ENCODE measurements at regions of chr12 and their contacts with region 1.

Region 1: GRCh38 chr12:101939856-101940265 is 62.5 kb downstream of the DRAM1 start:
- DNase-seq: peak; percentile 45
- H3K4me3 Mint-ChIP-seq: no peak overlapping the region
- H3K27ac Mint-ChIP-seq: no peak overlapping the region
- H3K4me1 Mint-ChIP-seq: peaks cover 39% of the 10 kb centered on the region
- H3K27me3 Mint-ChIP-seq: peaks cover 8% of the 10 kb centered on the region

Region 2: GRCh38 chr12:101819467-101819866 is 120.4 kb before region 1 on chr12:
- intact Hi-C with region 1: no loop called
- DNase-seq: no peak
- H3K4me3 Mint-ChIP-seq: peak overlapping the region; percentile 54
- H3K27ac Mint-ChIP-seq: peak overlapping the region; percentile 84
- H3K4me1 Mint-ChIP-seq: peaks cover 57% of the 10 kb centered on the region
- H3K27me3 Mint-ChIP-seq: no peaks in the 10 kb centered on the region

Region 3: GRCh38 chr12:101876861-101877815 is 62.7 kb before region 1 on chr12 and contains the start of gene DRAM1:
- intact Hi-C with region 1: loop called (anchors 1 kb)
- DNase-seq: peak; percentile 78
- H3K4me3 Mint-ChIP-seq: peak within 1 kb of the TSS; percentile 90
- H3K27ac Mint-ChIP-seq: peak within 1 kb of the TSS; percentile 83
- H3K4me1 Mint-ChIP-seq: peaks cover 12% of the 10 kb centered on the region
- H3K27me3 Mint-ChIP-seq: no peaks in the 10 kb centered on the region
- total RNA-seq, gene DRAM1: 3.2 and 4.1 TPM in 2 replicates

Region 4: GRCh38 chr12:102119674-102120563 is 180.1 kb after region 1 on chr12 and contains the starts of genes NUP37 and PARPBP:
- intact Hi-C with region 1: loop called (anchors 1 kb)
- DNase-seq: peak; percentile 92
- H3K4me3 Mint-ChIP-seq: peak within 1 kb of the TSS; percentile 92
- H3K27ac Mint-ChIP-seq: peak within 1 kb of the TSS; percentile 95
- H3K4me1 Mint-ChIP-seq: peaks cover 48% of the 10 kb centered on the region
- H3K27me3 Mint-ChIP-seq: no peaks in the 10 kb centered on the region
- total RNA-seq, gene NUP37: 81.5 and 84.1 TPM in 2 replicates
- total RNA-seq, gene PARPBP: 23.5 and 25.1 TPM in 2 replicates

Region 5: DNA sequence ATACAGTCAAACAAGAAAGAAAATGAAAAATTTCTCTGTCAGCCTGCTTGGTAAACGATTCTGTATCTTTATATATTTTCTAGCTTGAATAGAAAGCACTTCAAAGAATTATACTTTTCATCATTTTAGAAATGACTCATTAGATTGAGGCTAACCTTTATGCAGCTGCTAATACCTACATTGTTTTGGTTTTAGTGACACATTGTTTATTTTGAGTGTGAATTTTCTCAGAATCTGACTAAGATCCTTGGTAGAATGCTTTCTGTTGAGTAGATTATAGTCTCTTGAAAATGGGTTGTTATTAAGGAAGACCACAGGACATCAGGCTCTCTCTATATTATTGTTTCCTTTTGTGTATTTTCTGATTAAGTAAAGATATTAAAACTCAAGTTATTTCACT is 257.9 kb after region 1 on chr12 and contains the start of gene PMCH:
- intact Hi-C with region 1: loop called (anchors 1 kb)
- DNase-seq: no peak
- H3K4me3 Mint-ChIP-seq: peak within 1 kb of the TSS; percentile 2
- H3K27ac Mint-ChIP-seq: peak within 1 kb of the TSS; percentile 75
- H3K4me1 Mint-ChIP-seq: peaks cover 20% of the 10 kb centered on the region
- H3K27me3 Mint-ChIP-seq: no peaks in the 10 kb centered on the region
- total RNA-seq, gene PMCH: 3.1 and 4.3 TPM in 2 replicates

Region 6: DNA sequence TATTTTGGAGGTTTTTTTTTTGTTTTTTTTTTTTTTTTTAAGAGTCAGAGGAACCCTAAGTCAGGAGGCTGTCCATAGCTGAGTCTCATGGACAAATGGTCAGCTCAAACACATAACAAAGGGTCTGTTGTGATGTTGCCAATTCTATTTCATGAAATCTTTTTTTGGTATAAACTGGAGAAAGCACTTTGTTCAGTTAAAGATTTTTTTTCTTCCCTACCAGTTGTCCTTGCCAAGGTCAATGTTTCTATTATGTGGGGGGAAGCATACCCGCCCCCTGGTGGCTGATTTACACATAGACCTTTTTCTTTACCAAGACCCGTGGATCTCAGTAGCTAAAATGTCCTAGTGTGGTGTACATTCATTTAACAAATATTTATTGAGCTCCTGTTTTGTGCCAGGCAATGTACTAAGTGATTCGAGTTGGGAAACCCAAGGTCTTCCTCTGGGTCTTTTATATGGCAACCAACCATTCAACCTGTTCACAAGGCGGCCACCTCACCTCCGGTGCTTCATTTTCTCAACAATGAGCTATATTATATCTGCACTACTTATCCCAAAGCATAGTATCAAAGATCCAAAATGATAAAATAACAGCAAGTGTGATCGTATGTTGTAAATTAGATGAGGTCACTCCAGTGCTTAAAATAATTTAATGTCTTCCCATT is 762.7 kb after region 1 on chr12:
- intact Hi-C with region 1: loop called (anchors 1 kb)
- DNase-seq: peak; percentile 9
- H3K4me3 Mint-ChIP-seq: no peak overlapping the region
- H3K27ac Mint-ChIP-seq: no peak overlapping the region
- H3K4me1 Mint-ChIP-seq: no peaks in the 10 kb centered on the region
- H3K27me3 Mint-ChIP-seq: peaks cover 10% of the 10 kb centered on the region

Region 7: GRCh38 chr12:102769319-102769916 is 829.6 kb after region 1 on chr12:
- intact Hi-C with region 1: loop called (anchors 1 kb)
- DNase-seq: peak; percentile 11
- H3K4me3 Mint-ChIP-seq: no peak overlapping the region
- H3K27ac Mint-ChIP-seq: no peak overlapping the region
- H3K4me1 Mint-ChIP-seq: no peaks in the 10 kb centered on the region
- H3K27me3 Mint-ChIP-seq: peaks cover 12% of the 10 kb centered on the region

Region 8: GRCh38 chr12:102879144-102879763 is 939.4 kb after region 1 on chr12:
- intact Hi-C with region 1: loop called (anchors 1 kb)
- DNase-seq: no peak
- H3K4me3 Mint-ChIP-seq: no peak overlapping the region
- H3K27ac Mint-ChIP-seq: no peak overlapping the region
- H3K4me1 Mint-ChIP-seq: peaks cover 5% of the 10 kb centered on the region
- H3K27me3 Mint-ChIP-seq: peaks cover 4% of the 10 kb centered on the region

Measured in activated T-helper 1 cell treated with anti-CD3 and anti-CD28 coated beads, Interleukin-12 subunit alpha, Interleukin-12 subunit beta, Interleukin-2, Interleukin-4 antibody, amounts not matched to agents 30 ng/mL and 10 ng/mL and 1 ng/mL, durations not matched to agents 14 hours and 24 hours and 36 hours (primary cell).